ENCODE measurements at regions of chr5 and their contacts with region 1.

Region 1: GRCh38 chr5:151164686-151165392 is 7.3 kb upstream of the ANXA6 start:
- DNase-seq: peak; percentile 88
- ATAC-seq: peak; percentile 98
- H3K4me3 Mint-ChIP-seq: no peak overlapping the region
- H3K27ac Mint-ChIP-seq: no peak overlapping the region
- H3K4me1 Mint-ChIP-seq: peaks cover 14% of the 10 kb centered on the region
- H3K27me3 Mint-ChIP-seq: no peaks in the 10 kb centered on the region

Region 2: GRCh38 chr5:150846654-150847333 is 318.0 kb before region 1 on chr5:
- CTCF ChIA-PET with region 1: no interaction called
- POLR2A ChIA-PET with region 1: no interaction called
- intact Hi-C with region 1: loop called in 1 of 2 experiments (anchors 2 kb)
- DNase-seq: peak; percentile 82
- ATAC-seq: peak; percentile 94
- H3K4me3 Mint-ChIP-seq: peak overlapping the region; percentile 67
- H3K27ac Mint-ChIP-seq: peak overlapping the region; percentile 93
- H3K4me1 Mint-ChIP-seq: peaks cover 22% of the 10 kb centered on the region
- H3K27me3 Mint-ChIP-seq: no peaks in the 10 kb centered on the region

Region 3: GRCh38 chr5:151080623-151081430 is 84.0 kb before region 1 on chr5 and contains the start of gene TNIP1:
- CTCF ChIA-PET with region 1: interaction called, 10 read pairs
- POLR2A ChIA-PET with region 1: no interaction called
- intact Hi-C with region 1: no loop called
- DNase-seq: peak; percentile 96
- ATAC-seq: peak; percentile 67
- H3K4me3 Mint-ChIP-seq: peak within 1 kb of the TSS; percentile 80
- H3K27ac Mint-ChIP-seq: peak within 1 kb of the TSS; percentile 91
- H3K4me1 Mint-ChIP-seq: peaks cover 74% of the 10 kb centered on the region
- H3K27me3 Mint-ChIP-seq: no peaks in the 10 kb centered on the region
- total RNA-seq, gene TNIP1: 351 to 408 TPM

Region 4: GRCh38 chr5:151141535-151141934 is 23.3 kb before region 1 on chr5:
- CTCF ChIA-PET with region 1: interaction called, 685 read pairs
- POLR2A ChIA-PET with region 1: interaction called, 6 read pairs
- intact Hi-C with region 1: no loop called
- DNase-seq: peak; percentile 82
- ATAC-seq: peak; percentile 94
- H3K4me3 Mint-ChIP-seq: peak overlapping the region; percentile 64
- H3K27ac Mint-ChIP-seq: peak overlapping the region; percentile 82
- H3K4me1 Mint-ChIP-seq: peaks cover 85% of the 10 kb centered on the region
- H3K27me3 Mint-ChIP-seq: no peaks in the 10 kb centered on the region

Region 5: DNA sequence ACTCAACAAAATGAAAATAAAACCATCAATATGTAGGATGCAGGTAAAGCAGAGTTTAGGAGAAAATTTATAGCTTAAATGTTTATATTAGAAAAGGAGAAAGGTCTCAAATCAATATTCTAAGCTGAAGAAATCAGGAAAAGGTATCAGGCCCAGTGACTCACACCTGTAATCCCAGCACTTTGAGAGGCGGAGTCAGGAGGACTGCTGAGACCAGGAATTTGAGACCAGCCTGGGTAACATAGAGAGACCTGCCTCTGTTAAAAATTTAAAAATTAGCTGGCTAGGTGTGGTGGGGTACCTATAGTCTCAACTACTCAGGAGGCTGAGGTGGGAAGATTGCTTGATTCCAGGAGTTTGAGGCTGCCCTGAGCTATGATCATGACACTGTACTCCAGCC is 26.8 kb after region 1 on chr5:
- CTCF ChIA-PET with region 1: interaction called, 11 read pairs
- POLR2A ChIA-PET with region 1: no interaction called
- intact Hi-C with region 1: no loop called
- DNase-seq: no peak
- ATAC-seq: no peak
- H3K4me3 Mint-ChIP-seq: no peak overlapping the region
- H3K27ac Mint-ChIP-seq: no peak overlapping the region
- H3K4me1 Mint-ChIP-seq: peaks cover 43% of the 10 kb centered on the region
- H3K27me3 Mint-ChIP-seq: no peaks in the 10 kb centered on the region

Region 6: DNA sequence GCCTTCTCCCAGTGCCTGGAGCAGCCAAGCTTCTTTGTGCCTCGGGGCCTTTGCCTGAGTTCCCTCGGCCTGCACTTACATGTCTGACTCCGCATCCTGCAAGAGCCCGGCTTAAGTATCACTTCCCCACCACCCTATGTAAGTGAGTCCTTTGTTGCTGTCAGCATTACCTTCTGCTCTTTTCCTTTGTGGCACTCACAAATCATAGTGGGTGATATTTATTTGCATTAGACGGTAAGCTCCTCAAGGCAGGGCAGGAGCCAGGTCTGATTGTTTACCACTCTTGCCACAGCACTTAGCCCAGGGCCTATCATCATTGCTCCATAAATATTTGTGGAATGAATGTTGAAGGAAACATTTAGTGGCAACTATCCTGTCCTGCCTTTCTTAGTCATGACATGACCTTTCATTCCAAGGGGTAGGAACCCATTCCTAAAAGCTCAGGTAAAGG is 92.9 kb after region 1 on chr5:
- CTCF ChIA-PET with region 1: no interaction called
- POLR2A ChIA-PET with region 1: no interaction called
- intact Hi-C with region 1: no loop called
- DNase-seq: no peak
- ATAC-seq: no peak
- H3K4me3 Mint-ChIP-seq: no peak overlapping the region
- H3K27ac Mint-ChIP-seq: no peak overlapping the region
- H3K4me1 Mint-ChIP-seq: peaks cover 22% of the 10 kb centered on the region
- H3K27me3 Mint-ChIP-seq: no peaks in the 10 kb centered on the region

Region 7: DNA sequence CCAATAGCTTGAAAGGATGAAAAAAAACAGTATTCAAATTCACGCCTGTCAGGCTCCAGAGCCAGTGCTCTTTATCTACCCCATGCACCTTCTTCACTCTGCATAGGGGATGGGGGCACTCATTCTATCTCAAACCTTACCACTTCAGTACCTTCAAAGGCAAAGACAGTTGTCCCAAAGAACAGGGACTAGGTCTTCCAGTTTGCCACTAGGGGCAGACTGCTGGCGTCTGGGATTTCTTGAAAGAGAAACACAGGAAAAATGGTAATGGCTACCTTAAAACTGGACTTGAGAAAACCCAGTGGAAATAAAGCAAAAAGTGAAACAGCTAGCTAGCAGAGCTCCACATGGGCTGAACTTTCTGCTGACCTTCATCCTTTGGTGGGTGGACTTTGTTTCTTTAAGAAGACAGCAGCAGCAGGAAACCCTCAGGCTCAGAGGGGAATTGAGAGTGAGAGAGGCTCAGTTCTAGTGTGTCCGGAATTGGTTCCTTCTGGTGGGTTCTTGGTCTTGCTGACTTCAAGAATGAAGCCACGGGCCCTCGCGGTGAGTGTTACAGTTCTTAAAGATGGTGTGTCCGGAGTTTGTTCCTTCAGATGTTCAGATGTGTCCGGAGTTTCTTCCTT is 241.6 kb after region 1 on chr5:
- CTCF ChIA-PET with region 1: no interaction called
- POLR2A ChIA-PET with region 1: no interaction called
- intact Hi-C with region 1: no loop called
- DNase-seq: no peak
- ATAC-seq: no peak
- H3K4me3 Mint-ChIP-seq: no peak overlapping the region
- H3K27ac Mint-ChIP-seq: no peak overlapping the region
- H3K4me1 Mint-ChIP-seq: no peaks in the 10 kb centered on the region
- H3K27me3 Mint-ChIP-seq: peaks cover 31% of the 10 kb centered on the region

Measured in activated CD4-positive, alpha-beta T cell treated with anti-CD3 and anti-CD28 coated beads for 36 hours (primary cell).